B cell (primary cell): ENCODE measurements at regions of chrX and their contacts with region 1.

Region 1: DNA sequence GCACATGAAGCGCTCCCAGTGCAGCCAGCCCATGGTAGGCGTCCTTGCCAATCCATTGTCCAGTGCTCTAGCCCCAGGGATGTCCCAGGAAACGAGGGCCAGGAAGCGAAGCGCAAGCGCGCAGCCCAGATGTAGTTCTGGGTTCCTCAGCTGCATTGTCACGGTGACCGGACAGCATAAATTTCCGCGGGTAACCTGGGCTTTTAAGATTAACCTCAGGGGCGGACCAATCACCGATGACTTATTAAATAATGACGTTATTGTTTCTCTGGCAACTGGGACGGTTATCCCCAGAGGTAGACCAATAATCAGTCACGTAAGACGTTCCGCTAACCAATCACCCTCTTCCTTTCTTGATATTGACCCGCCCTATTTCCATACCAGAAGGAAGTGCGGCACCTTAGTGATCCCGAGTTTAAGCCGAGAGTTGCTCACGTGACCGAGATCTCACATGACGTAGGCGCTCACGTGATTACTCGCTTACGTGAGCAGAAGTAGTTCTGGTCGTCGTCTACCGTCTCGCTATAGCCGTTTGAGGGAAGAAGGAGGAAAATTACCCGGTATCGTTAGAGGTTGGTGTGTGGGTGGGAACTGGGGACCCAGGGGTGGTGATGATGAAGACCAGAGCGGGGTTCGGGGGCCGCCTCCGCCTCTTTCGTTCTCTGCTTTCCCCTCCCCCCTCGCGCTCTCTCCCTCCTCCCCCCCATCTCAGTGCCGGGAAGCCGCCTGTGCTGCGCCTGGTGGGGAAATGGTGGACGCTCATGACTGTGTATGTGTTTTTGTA is at the starts of genes GLA and HNRNPH2:
- DNase-seq: peak; percentile 97
- ATAC-seq: peak; percentile 83
- H3K4me3 ChIP-seq: peak within 1 kb of the TSS; percentile 68 to 89 (median 84)
- H3K4me3 Mint-ChIP-seq: peak within 1 kb of the TSS; percentile 99
- H3K27ac ChIP-seq: peak within 1 kb of the TSS; percentile 96 to 98
- H3K27ac Mint-ChIP-seq: peak within 1 kb of the TSS; percentile 100
- H3K4me1 ChIP-seq: peaks cover 29 to 34% of the 10 kb centered on the region in 2 donors
- H3K4me1 Mint-ChIP-seq: peaks cover 38% of the 10 kb centered on the region
- H3K27me3 ChIP-seq: no peaks in the 10 kb centered on the region
- H3K27me3 Mint-ChIP-seq: no peaks in the 10 kb centered on the region
- CTCF ChIP-seq: no peak
- total RNA-seq, gene GLA: 22.1 and 27.7 TPM in 2 replicates
- total RNA-seq, gene HNRNPH2: 48.4 and 57.1 TPM in 2 replicates

Region 2: GRCh38 chrX:101051549-101052302 is 356.2 kb before region 1 on chrX and contains the start of gene TRMT2B:
- CTCF ChIA-PET with region 1: no interaction called
- POLR2A ChIA-PET with region 1: no interaction called
- intact Hi-C with region 1: loop called (anchors 5 kb)
- DNase-seq: peak; percentile 85
- ATAC-seq: peak; percentile 83
- H3K4me3 ChIP-seq: peak within 1 kb of the TSS; percentile 56 to 85 (median 76)
- H3K4me3 Mint-ChIP-seq: peak within 1 kb of the TSS; percentile 86
- H3K27ac ChIP-seq: peak within 1 kb of the TSS; percentile 59 to 86
- H3K27ac Mint-ChIP-seq: peak within 1 kb of the TSS; percentile 93
- H3K4me1 ChIP-seq: peaks cover 7 to 13% of the 10 kb centered on the region in 2 donors
- H3K4me1 Mint-ChIP-seq: peaks cover 25% of the 10 kb centered on the region
- H3K27me3 ChIP-seq: no peaks in the 10 kb centered on the region
- H3K27me3 Mint-ChIP-seq: no peaks in the 10 kb centered on the region
- CTCF ChIP-seq: no peak
- total RNA-seq, gene TRMT2B: 51.2 and 56.4 TPM in 2 replicates

Region 3: DNA sequence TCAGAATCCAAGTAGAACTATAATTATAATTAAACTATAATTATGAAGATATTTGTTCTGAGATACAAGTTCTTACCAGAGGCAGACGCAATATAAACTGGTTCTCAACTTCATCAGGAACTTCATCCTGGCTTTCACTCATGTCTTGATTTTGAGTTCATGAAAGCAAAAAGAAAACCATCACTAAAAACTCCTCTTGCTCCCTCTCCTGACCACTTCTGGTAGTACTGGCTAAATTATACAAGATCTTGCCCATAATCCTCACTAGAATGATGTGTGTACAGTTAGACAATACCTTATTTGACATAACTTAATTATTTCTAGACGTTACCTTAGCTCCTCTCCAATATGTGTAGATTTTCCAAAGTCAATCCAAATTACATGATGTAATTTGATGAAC is 120.5 kb before region 1 on chrX:
- CTCF ChIA-PET with region 1: no interaction called
- POLR2A ChIA-PET with region 1: no interaction called
- intact Hi-C with region 1: no loop called
- DNase-seq: peak; percentile 51
- ATAC-seq: peak; percentile 47
- H3K4me3 ChIP-seq: no peak overlapping the region
- H3K4me3 Mint-ChIP-seq: no peak overlapping the region
- H3K27ac ChIP-seq: no peak overlapping the region
- H3K27ac Mint-ChIP-seq: no peak overlapping the region
- H3K4me1 ChIP-seq: no peaks in the 10 kb centered on the region
- H3K4me1 Mint-ChIP-seq: no peaks in the 10 kb centered on the region
- H3K27me3 ChIP-seq: peaks cover 0 to 3% (median 0%) of the 10 kb centered on the region in 4 experiments
- H3K27me3 Mint-ChIP-seq: peaks cover 2% of the 10 kb centered on the region
- CTCF ChIP-seq: peak; percentile 64

Region 4: DNA sequence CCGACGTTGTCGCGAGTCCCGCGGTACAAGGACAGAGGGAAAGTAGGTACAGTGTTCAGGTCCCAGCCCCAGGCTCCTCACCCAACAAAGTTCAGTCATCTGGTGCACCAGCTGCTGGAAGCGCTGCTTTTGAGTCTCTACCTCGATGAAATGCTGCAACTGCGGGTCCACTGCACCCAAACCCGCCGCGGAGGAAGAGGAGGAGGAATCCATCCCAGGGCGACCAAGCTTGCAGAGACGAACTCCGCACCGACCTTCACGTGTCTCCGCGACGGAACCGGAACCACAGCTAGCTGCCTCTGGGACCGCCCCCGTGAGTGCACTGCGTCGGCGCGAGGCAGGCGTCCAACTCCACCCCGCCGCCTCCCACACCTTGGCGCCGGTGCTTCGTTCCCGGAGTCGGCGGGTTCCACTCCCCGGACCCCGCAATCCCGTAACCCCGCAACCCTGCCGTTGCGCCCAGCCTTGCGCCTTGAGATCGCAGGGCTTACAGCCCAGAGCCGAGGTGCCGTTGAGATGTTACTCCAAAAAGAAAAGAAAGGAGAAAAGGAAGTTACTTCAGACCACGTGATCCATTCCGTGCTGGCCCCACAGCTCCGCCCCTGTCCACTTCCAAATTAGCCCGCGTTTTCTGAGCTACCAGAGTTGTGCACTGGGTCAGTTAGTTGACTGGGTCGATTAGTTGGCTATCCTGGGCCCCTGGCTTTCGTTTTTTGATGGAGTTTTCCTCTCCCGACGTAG is 59.3 kb before region 1 on chrX and contains the start of gene TIMM8A:
- CTCF ChIA-PET with region 1: no interaction called
- POLR2A ChIA-PET with region 1: no interaction called
- intact Hi-C with region 1: loop called (anchors 2 kb)
- DNase-seq: peak; percentile 82
- ATAC-seq: peak; percentile 99
- H3K4me3 ChIP-seq: peak within 1 kb of the TSS; percentile 64 to 81 (median 74)
- H3K4me3 Mint-ChIP-seq: peak within 1 kb of the TSS; percentile 92
- H3K27ac ChIP-seq: peak within 1 kb of the TSS; percentile 55 to 81
- H3K27ac Mint-ChIP-seq: peak within 1 kb of the TSS; percentile 86
- H3K4me1 ChIP-seq: peaks cover 3 to 15% of the 10 kb centered on the region in 2 donors
- H3K4me1 Mint-ChIP-seq: peaks cover 12% of the 10 kb centered on the region
- H3K27me3 ChIP-seq: no peaks in the 10 kb centered on the region
- H3K27me3 Mint-ChIP-seq: no peaks in the 10 kb centered on the region
- CTCF ChIP-seq: no peak
- total RNA-seq, gene TIMM8A: 12.0 and 13.4 TPM in 2 replicates

Region 5: DNA sequence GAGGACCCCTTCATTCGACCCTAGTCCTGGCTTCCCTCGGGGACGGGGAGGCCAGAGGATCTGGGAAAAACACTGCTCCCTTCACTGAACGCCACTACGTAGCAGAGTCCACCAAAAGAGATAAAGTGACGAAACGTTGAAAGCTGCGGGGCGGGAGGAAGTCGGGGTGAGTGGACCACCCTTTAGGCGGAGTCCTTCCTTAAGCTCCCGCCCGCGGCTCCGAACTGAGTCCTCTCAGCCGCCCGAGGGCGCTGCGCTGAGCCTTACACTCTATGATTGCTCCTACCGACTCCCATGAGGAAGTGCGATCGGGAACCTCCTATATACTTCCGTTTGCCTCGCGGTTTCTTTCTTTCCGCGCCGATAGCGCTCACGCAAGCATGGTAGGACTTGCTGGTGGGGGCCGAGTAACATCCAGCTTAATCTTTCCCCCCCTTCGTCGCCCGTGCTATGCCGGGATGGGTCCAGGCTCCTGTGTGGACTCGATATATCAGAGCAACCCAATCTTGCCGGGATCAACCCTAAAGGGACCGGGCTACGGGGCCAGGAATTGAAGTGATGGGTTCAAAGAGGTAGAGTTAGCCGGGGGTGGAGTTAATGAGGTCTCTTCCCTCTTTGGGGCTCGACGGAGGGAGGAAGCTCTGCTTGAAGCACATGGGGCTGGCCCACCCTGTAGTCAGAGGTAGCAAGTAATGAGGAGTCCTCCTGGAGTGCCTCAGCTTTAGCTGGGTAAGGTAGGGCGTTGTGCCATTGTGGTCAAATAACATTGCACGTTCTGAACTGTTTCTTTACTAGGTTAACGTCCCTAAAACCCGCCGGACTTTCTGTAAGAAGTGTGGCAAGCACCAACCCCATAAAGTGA is 17.0 kb before region 1 on chrX and contains the start of gene RPL36A:
- CTCF ChIA-PET with region 1: interaction called, 7 read pairs
- POLR2A ChIA-PET with region 1: interaction called, 7 read pairs
- intact Hi-C with region 1: loop called (anchors 1 kb)
- DNase-seq: peak; percentile 89
- ATAC-seq: peak; percentile 82
- H3K4me3 ChIP-seq: peak within 1 kb of the TSS; percentile 47 to 72 (median 58)
- H3K4me3 Mint-ChIP-seq: peak within 1 kb of the TSS; percentile 95
- H3K27ac ChIP-seq: peak within 1 kb of the TSS; percentile 62 to 85
- H3K27ac Mint-ChIP-seq: peak within 1 kb of the TSS; percentile 95
- H3K4me1 ChIP-seq: peaks cover 22 to 26% of the 10 kb centered on the region in 2 donors
- H3K4me1 Mint-ChIP-seq: peaks cover 41% of the 10 kb centered on the region
- H3K27me3 ChIP-seq: no peaks in the 10 kb centered on the region
- H3K27me3 Mint-ChIP-seq: no peaks in the 10 kb centered on the region
- CTCF ChIP-seq: peak; percentile 68
- total RNA-seq, gene RPL36A: 155 and 156 TPM in 2 replicates

Region 6: DNA sequence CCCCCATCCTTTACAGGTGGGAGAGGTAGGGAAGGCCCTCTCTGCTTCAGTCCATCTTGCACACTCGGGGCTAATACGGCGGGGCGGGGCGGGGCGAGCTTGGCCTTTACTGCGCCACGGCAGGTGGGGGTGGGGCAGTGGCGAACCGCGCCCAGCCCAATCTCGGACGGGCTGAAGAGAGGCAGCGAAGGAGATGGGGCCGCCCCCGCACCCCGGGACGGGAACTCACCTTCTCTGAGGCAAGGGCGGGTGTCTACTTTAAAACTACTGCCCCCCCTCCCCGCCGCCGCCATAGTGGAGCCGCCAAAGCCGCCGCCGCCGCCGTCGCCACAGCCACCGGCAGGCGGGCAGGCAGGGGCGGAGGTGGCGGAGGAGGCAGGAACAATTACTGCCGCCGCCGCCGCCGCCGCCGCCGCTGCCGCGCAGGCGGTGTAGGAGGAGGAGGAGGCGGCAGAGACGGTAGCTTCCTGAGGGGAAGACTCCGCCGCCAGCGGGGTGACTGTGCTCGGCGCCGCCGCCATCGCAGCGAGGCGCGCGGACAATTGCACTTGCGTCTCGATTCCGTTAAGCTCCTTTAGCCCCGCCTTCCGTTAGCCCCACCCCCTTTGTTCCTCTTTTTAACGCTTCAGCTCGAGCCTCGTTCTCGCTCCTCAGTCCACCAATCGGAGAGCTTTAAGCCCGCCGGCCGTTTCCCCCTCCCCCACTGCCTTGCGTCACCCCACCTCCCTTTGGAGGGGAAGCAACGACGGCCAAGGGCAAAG is 523.7 kb after region 1 on chrX and contains the start of gene ZMAT1:
- CTCF ChIA-PET with region 1: interaction called, 3 read pairs
- POLR2A ChIA-PET with region 1: no interaction called
- intact Hi-C with region 1: loop called (anchors 2 kb)
- DNase-seq: peak; percentile 95
- ATAC-seq: peak; percentile 84
- H3K4me3 ChIP-seq: peak within 1 kb of the TSS; percentile 41 to 68 (median 61)
- H3K4me3 Mint-ChIP-seq: peak within 1 kb of the TSS; percentile 83
- H3K27ac ChIP-seq: peak within 1 kb of the TSS; percentile 94 to 97
- H3K27ac Mint-ChIP-seq: peak within 1 kb of the TSS; percentile 95
- H3K4me1 ChIP-seq: peaks cover 6 to 12% of the 10 kb centered on the region in 2 donors
- H3K4me1 Mint-ChIP-seq: peaks cover 17% of the 10 kb centered on the region
- H3K27me3 ChIP-seq: peaks cover 0 to 2% (median 0%) of the 10 kb centered on the region in 4 experiments
- H3K27me3 Mint-ChIP-seq: no peaks in the 10 kb centered on the region
- CTCF ChIP-seq: no peak
- total RNA-seq, gene ZMAT1: 38.4 and 43.6 TPM in 2 replicates

Region 7: GRCh38 chrX:102652031-102652688 is 1244.2 kb after region 1 on chrX:
- CTCF ChIA-PET with region 1: no interaction called
- POLR2A ChIA-PET with region 1: no interaction called
- intact Hi-C with region 1: loop called (anchors 5 kb)
- DNase-seq: peak; percentile 62
- ATAC-seq: peak; percentile 57
- H3K4me3 ChIP-seq: peak overlapping the region; percentile 16 to 71 (median 64)
- H3K4me3 Mint-ChIP-seq: peak overlapping the region; percentile 87
- H3K27ac ChIP-seq: peak overlapping the region; percentile 34 to 51
- H3K27ac Mint-ChIP-seq: peak overlapping the region; percentile 89
- H3K4me1 ChIP-seq: no peaks in the 10 kb centered on the region
- H3K4me1 Mint-ChIP-seq: peaks cover 16% of the 10 kb centered on the region
- H3K27me3 ChIP-seq: no peaks in the 10 kb centered on the region
- H3K27me3 Mint-ChIP-seq: no peaks in the 10 kb centered on the region
- CTCF ChIP-seq: peak; percentile 37